ENCODE measurements at regions of chrX and their contacts with region 1.

Region 1: GRCh38 chrX:152941328-152942106 is 43.6 kb downstream of the ZNF185 start:
- DNase-seq: peak; percentile 76 to 92 (median 88)
- ATAC-seq: peak; percentile 98
- H3K4me3 ChIP-seq: peak overlapping the region; percentile 67
- H3K4me3 Mint-ChIP-seq: peak overlapping the region; percentile 75 to 89 (median 86)
- H3K27ac ChIP-seq: peak overlapping the region; percentile 77
- H3K27ac Mint-ChIP-seq: peak overlapping the region; percentile 84 to 93 (median 87)
- H3K4me1 ChIP-seq: peaks cover 8 to 11% of the 10 kb centered on the region in 2 donors
- H3K4me1 Mint-ChIP-seq: peaks cover 0 to 13% (median 5%) of the 10 kb centered on the region in 7 donors
- H3K27me3 ChIP-seq: no peaks in the 10 kb centered on the region
- H3K27me3 Mint-ChIP-seq: no peaks in the 10 kb centered on the region

Region 2: GRCh38 chrX:152830312-152831305 is 110.9 kb before region 1 on chrX and contains the starts of genes CETN2 and NSDHL:
- CTCF ChIA-PET with region 1: no interaction called
- POLR2A ChIA-PET with region 1: no interaction called
- intact Hi-C with region 1: loop called in 1 of 2 experiments (anchors 1 kb)
- DNase-seq: peak; percentile 83 to 95 (median 92)
- ATAC-seq: peak; percentile 98
- H3K4me3 ChIP-seq: peak within 1 kb of the TSS; percentile 67
- H3K4me3 Mint-ChIP-seq: peak within 1 kb of the TSS; percentile 87 to 98 (median 92)
- H3K27ac ChIP-seq: peak within 1 kb of the TSS; percentile 82
- H3K27ac Mint-ChIP-seq: peak within 1 kb of the TSS; percentile 52 to 98 (median 94)
- H3K4me1 ChIP-seq: peaks cover 6 to 9% of the 10 kb centered on the region in 2 donors
- H3K4me1 Mint-ChIP-seq: peaks cover 11 to 28% (median 26%) of the 10 kb centered on the region in 7 donors
- H3K27me3 ChIP-seq: no peaks in the 10 kb centered on the region
- H3K27me3 Mint-ChIP-seq: no peaks in the 10 kb centered on the region
- total RNA-seq, gene CETN2: 7.0 to 10.9 (median 7.6) TPM
- total RNA-seq, gene NSDHL: 3.3 to 13.9 (median 7.2) TPM

Region 3: DNA sequence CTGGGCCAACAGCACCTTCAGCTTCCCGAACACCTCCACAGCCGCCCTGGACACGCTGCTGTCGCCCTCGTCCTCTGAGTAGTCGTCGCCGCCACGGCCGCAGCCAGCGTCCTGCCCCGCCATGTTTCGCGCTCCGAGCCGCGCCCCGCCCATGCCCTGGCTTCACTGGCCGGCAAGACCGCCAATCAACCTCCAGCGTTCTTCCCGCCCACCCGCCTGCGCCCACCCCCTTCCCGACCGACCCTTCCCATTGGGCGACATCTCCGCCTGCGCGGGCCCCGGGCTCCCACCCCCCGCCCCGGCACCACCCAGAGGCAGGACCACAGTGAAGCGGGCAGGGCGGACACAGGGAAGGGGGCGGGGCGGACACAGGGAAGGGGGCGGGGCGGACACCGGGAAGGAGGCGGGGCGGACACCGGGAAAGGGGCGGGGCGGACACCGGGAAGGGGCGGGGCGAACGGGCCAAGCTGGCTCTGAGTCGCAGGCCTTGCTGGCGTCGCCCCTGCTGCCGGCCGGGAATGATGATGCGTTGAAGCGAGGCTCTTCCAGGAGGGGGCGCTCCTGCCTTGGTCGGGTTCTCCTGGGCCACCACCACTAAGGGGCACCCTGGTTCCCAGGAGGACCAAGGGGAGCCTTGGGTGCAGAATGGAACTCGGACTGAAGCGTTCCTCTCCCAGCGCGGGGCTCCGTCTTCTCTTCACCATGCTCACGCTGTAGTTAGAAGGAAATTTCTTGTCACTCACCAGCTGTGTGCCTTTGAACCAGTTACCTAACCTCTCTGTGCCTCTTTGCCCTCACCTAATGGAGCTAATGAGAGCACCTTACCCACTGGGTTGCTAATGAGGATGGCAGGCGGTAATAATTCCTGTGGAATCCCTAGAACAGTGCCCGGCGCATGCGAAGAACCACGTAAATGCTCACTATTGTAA is 529.2 kb after region 1 on chrX and contains the start of gene HAUS7:
- CTCF ChIA-PET with region 1: no interaction called
- POLR2A ChIA-PET with region 1: interaction called, 6 read pairs
- intact Hi-C with region 1: loop called (anchors 1 kb)
- DNase-seq: peak; percentile 73 to 88 (median 85)
- ATAC-seq: peak; percentile 92
- H3K4me3 ChIP-seq: peak within 1 kb of the TSS; percentile 74
- H3K4me3 Mint-ChIP-seq: peak within 1 kb of the TSS; percentile 64 to 88 (median 82)
- H3K27ac ChIP-seq: peak within 1 kb of the TSS; percentile 68
- H3K27ac Mint-ChIP-seq: peak within 1 kb of the TSS in 8 of 9 donors; percentile 62 to 85 (median 82)
- H3K4me1 ChIP-seq: peaks cover 3 to 17% of the 10 kb centered on the region in 2 donors
- H3K4me1 Mint-ChIP-seq: peaks cover 0 to 30% (median 12%) of the 10 kb centered on the region in 7 donors
- H3K27me3 ChIP-seq: no peaks in the 10 kb centered on the region
- H3K27me3 Mint-ChIP-seq: no peaks in the 10 kb centered on the region
- total RNA-seq, gene HAUS7: 23.2 to 44.8 (median 31.4) TPM

Region 4: GRCh38 chrX:153599192-153600031 is 657.9 kb after region 1 on chrX:
- CTCF ChIA-PET with region 1: no interaction called
- POLR2A ChIA-PET with region 1: interaction called, 4 read pairs
- intact Hi-C with region 1: loop called in 1 of 2 experiments (anchors 5 kb)
- DNase-seq: peak; percentile 77 to 91 (median 82)
- ATAC-seq: peak; percentile 94
- H3K4me3 ChIP-seq: peak overlapping the region; percentile 69
- H3K4me3 Mint-ChIP-seq: peak overlapping the region; percentile 79 to 93 (median 90)
- H3K27ac ChIP-seq: peak overlapping the region; percentile 74
- H3K27ac Mint-ChIP-seq: peak overlapping the region in 7 of 9 donors; percentile 48 to 83 (median 64)
- H3K4me1 ChIP-seq: peaks cover 19 to 21% of the 10 kb centered on the region in 2 donors
- H3K4me1 Mint-ChIP-seq: peaks cover 23 to 60% (median 46%) of the 10 kb centered on the region in 7 donors
- H3K27me3 ChIP-seq: no peaks in the 10 kb centered on the region
- H3K27me3 Mint-ChIP-seq: no peaks in the 10 kb centered on the region

Region 5: GRCh38 chrX:153947009-153947769 is 1005.7 kb after region 1 on chrX:
- CTCF ChIA-PET with region 1: no interaction called
- POLR2A ChIA-PET with region 1: no interaction called
- intact Hi-C with region 1: loop called in 1 of 2 experiments (anchors 2 kb)
- DNase-seq: peak; percentile 58 to 83 (median 78)
- ATAC-seq: peak; percentile 93
- H3K4me3 ChIP-seq: no peak overlapping the region
- H3K4me3 Mint-ChIP-seq: peak overlapping the region; percentile 0 to 69 (median 32)
- H3K27ac ChIP-seq: no peak overlapping the region
- H3K27ac Mint-ChIP-seq: peak overlapping the region; percentile 26 to 94 (median 87)
- H3K4me1 ChIP-seq: peaks cover 3 to 9% of the 10 kb centered on the region in 2 donors
- H3K4me1 Mint-ChIP-seq: peaks cover 6 to 30% (median 20%) of the 10 kb centered on the region in 7 donors
- H3K27me3 ChIP-seq: no peaks in the 10 kb centered on the region
- H3K27me3 Mint-ChIP-seq: no peaks in the 10 kb centered on the region